Spleen (tissue), 13 donors: ENCODE measurements at regions of chr11 and their contacts with region 1.

Region 1: GRCh38 chr11:64152841-64153691 is 12.8 kb downstream of the MACROD1 start:
- DNase-seq: peak; percentile 93
- H3K4me3 ChIP-seq: peak overlapping the region in 2 of 8 donors; percentile 3 to 31
- H3K27ac ChIP-seq: no peak overlapping the region
- H3K4me1 ChIP-seq: peaks cover 13 to 56% (median 37%) of the 10 kb centered on the region in 6 donors
- H3K27me3 ChIP-seq: no peaks in the 10 kb centered on the region
- CTCF ChIP-seq: peak; percentile 93 to 100 (median 99)
- POLR2A ChIP-seq: no peak

Region 2: GRCh38 chr11:63768237-63769043 is 384.6 kb before region 1 on chr11 and contains the start of gene ZFTA:
- intact Hi-C with region 1: loop called (anchors 5 kb)
- DNase-seq: peak; percentile 90
- H3K4me3 ChIP-seq: peak within 1 kb of the TSS; percentile 76 to 96 (median 86)
- H3K27ac ChIP-seq: peak within 1 kb of the TSS; percentile 28 to 84 (median 80)
- H3K4me1 ChIP-seq: peaks cover 8 to 56% (median 25%) of the 10 kb centered on the region in 6 donors
- H3K27me3 ChIP-seq: peaks cover 0 to 21% (median 14%) of the 10 kb centered on the region in 7 donors
- CTCF ChIP-seq: peak in 7 of 11 experiments; percentile 32 to 93 (median 79)
- POLR2A ChIP-seq: no peak
- total RNA-seq, gene ZFTA: 7.7 to 16.9 (median 10.3) TPM

Region 3: GRCh38 chr11:63838678-63839507 is 314.2 kb before region 1 on chr11 and contains the start of gene MARK2:
- intact Hi-C with region 1: loop called (anchors 5 kb)
- DNase-seq: peak; percentile 99
- H3K4me3 ChIP-seq: peak within 1 kb of the TSS; percentile 76 to 99 (median 89)
- H3K27ac ChIP-seq: peak within 1 kb of the TSS; percentile 85 to 99 (median 96)
- H3K4me1 ChIP-seq: peaks cover 29 to 64% (median 56%) of the 10 kb centered on the region in 6 donors
- H3K27me3 ChIP-seq: no peaks in the 10 kb centered on the region
- CTCF ChIP-seq: peak in 2 of 11 experiments; percentile 7 to 37
- POLR2A ChIP-seq: no peak
- total RNA-seq, gene MARK2: 41.2 to 67.3 (median 48.6) TPM

Region 4: GRCh38 chr11:64000026-64000739 is 152.9 kb before region 1 on chr11:
- intact Hi-C with region 1: loop called (anchors 2 kb)
- DNase-seq: peak; percentile 94
- H3K4me3 ChIP-seq: peak overlapping the region; percentile 18 to 68 (median 44)
- H3K27ac ChIP-seq: peak overlapping the region in 5 of 8 donors; percentile 67 to 84 (median 76)
- H3K4me1 ChIP-seq: peaks cover 39 to 84% (median 64%) of the 10 kb centered on the region in 6 donors
- H3K27me3 ChIP-seq: peaks cover 0 to 36% (median 0%) of the 10 kb centered on the region in 7 donors
- CTCF ChIP-seq: peak; percentile 54 to 95 (median 83)
- POLR2A ChIP-seq: no peak

Region 5: GRCh38 chr11:64304316-64305072 is 151.4 kb after region 1 on chr11:
- intact Hi-C with region 1: no loop called
- DNase-seq: peak; percentile 98
- H3K4me3 ChIP-seq: peak overlapping the region; percentile 28 to 91 (median 78)
- H3K27ac ChIP-seq: peak overlapping the region; percentile 71 to 98 (median 94)
- H3K4me1 ChIP-seq: peaks cover 37 to 72% (median 42%) of the 10 kb centered on the region in 6 donors
- H3K27me3 ChIP-seq: peaks cover 3 to 31% (median 19%) of the 10 kb centered on the region in 7 donors
- CTCF ChIP-seq: peak; percentile 80 to 96 (median 92)
- POLR2A ChIP-seq: peak in 1 of 3 donors; percentile 22

Region 6: DNA sequence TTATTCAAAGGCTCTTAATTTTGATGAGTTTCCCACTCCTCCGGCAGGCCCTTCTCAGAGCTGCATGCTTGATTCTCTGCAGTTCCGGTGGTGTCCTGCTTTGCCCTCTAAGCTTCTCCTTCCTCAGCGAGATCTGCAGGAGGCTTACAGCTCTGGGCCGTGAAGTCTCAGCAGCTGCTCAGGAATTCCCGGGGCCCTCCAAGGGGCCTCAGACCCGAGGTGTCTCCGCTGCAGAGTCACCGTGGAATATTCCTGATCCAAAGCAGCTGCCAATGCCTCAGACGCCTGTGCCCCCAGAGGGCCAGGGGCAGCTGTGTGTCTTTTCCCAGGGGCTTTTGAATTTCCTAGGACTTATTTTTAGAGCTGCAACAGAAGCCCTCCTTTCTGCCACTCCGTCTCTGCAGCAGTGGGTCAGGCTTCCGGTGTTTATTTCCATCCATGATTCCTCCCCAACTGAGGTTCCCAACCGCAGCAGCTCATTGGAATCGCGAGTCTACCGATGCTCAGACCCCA is 243.1 kb after region 1 on chr11:
- intact Hi-C with region 1: no loop called
- DNase-seq: no peak
- H3K4me3 ChIP-seq: no peak overlapping the region
- H3K27ac ChIP-seq: peak overlapping the region in 4 of 8 donors; percentile 41 to 61 (median 52)
- H3K4me1 ChIP-seq: peaks cover 0 to 27% (median 16%) of the 10 kb centered on the region in 6 donors
- H3K27me3 ChIP-seq: peaks cover 0 to 18% (median 0%) of the 10 kb centered on the region in 7 donors
- CTCF ChIP-seq: no peak
- POLR2A ChIP-seq: no peak